Activated CD8-positive, alpha-beta memory T cell treated with anti-CD3 and anti-CD28 coated beads, Interleukin-2, amount 10 ng/mL, durations not matched to agents 7 days and 5 days (primary cell): ENCODE measurements at regions of chr1 and their contacts with region 1.

Region 1: DNA sequence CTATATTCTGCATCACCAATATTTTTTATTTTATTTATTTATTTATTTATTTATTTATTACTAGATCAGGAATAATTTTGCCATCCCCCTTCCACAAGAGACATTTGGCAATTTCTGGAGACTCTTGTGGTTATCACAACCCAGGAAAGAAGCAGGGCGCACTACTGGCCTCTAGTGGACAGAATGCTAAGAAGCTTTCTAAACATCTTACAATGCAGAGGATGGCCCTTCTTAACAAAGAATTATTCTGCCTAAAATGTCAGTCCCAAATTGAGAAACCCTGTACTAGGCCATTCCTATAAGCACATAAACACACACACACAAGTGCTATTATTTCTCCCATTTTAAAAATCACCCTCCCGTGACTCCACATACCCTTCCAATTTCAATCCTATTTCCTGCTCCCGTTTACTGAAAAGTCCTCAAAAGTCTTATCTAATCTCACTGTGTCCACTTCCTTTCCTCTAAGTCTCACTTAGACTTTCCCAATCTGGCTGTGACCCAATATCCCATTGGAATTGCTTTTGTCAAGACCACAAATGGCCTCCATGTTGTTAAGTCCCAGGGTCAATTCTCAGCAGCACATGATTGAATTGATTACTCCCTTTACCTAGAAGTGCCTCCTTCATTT is 43.7 kb upstream of the RNF11 start:
- DNase-seq: peak; percentile 65
- ATAC-seq: peak; percentile 45
- H3K4me3 Mint-ChIP-seq: no peak overlapping the region
- H3K27ac Mint-ChIP-seq: no peak overlapping the region
- H3K4me1 Mint-ChIP-seq: no peaks in the 10 kb centered on the region
- H3K27me3 Mint-ChIP-seq: peaks cover 6% of the 10 kb centered on the region

Region 2: DNA sequence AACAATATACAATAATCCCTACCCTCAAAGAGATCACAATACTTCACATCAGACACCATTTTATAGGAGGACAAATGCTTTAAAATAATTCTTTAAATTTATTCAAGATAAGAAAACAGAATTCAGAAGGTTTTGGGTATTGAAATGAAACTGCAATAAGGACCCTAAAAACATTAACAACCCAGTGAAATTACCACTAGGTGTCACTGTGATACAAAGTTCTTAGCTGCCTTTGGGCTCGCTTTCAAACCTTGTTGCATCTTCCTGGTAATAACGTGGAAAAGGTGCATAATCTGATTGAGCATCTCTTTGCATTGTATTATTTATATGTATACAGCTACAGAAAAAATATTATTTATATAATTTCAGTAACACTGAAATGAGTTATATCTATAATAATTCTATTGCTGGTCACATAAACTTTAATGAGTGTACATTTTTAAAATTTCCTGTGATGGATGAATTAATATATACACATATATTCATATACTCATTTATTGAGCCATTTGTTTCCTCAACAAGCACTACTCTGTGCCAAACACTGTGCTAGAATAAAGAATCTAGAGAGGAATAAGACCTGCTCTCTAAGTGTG is 417.5 kb before region 1 on chr1:
- CTCF ChIA-PET with region 1: interaction called, 69 read pairs
- DNase-seq: no peak
- ATAC-seq: no peak
- H3K4me3 Mint-ChIP-seq: no peak overlapping the region
- H3K27ac Mint-ChIP-seq: no peak overlapping the region
- H3K4me1 Mint-ChIP-seq: no peaks in the 10 kb centered on the region
- H3K27me3 Mint-ChIP-seq: no peaks in the 10 kb centered on the region

Region 3: GRCh38 chr1:50929376-50929958 is 262.9 kb before region 1 on chr1:
- CTCF ChIA-PET with region 1: interaction called, 16 read pairs
- DNase-seq: no peak
- ATAC-seq: no peak
- H3K4me3 Mint-ChIP-seq: no peak overlapping the region
- H3K27ac Mint-ChIP-seq: no peak overlapping the region
- H3K4me1 Mint-ChIP-seq: peaks cover 16% of the 10 kb centered on the region
- H3K27me3 Mint-ChIP-seq: no peaks in the 10 kb centered on the region

Region 4: GRCh38 chr1:50978144-50978851 is 214.0 kb before region 1 on chr1:
- CTCF ChIA-PET with region 1: no interaction called
- DNase-seq: peak; percentile 45
- ATAC-seq: peak; percentile 48
- H3K4me3 Mint-ChIP-seq: peak overlapping the region; percentile 77
- H3K27ac Mint-ChIP-seq: peak overlapping the region; percentile 48
- H3K4me1 Mint-ChIP-seq: peaks cover 22% of the 10 kb centered on the region
- H3K27me3 Mint-ChIP-seq: peaks cover 58% of the 10 kb centered on the region

Region 5: GRCh38 chr1:51203121-51203873 is 11.0 kb after region 1 on chr1:
- CTCF ChIA-PET with region 1: interaction called, 11 read pairs
- DNase-seq: no peak
- ATAC-seq: no peak
- H3K4me3 Mint-ChIP-seq: no peak overlapping the region
- H3K27ac Mint-ChIP-seq: no peak overlapping the region
- H3K4me1 Mint-ChIP-seq: no peaks in the 10 kb centered on the region
- H3K27me3 Mint-ChIP-seq: no peaks in the 10 kb centered on the region

Region 6: GRCh38 chr1:51296383-51297357 is 104.3 kb after region 1 on chr1:
- CTCF ChIA-PET with region 1: interaction called, 41 read pairs
- DNase-seq: peak; percentile 84
- ATAC-seq: peak; percentile 76
- H3K4me3 Mint-ChIP-seq: peak overlapping the region; percentile 58
- H3K27ac Mint-ChIP-seq: peak overlapping the region; percentile 71
- H3K4me1 Mint-ChIP-seq: peaks cover 37% of the 10 kb centered on the region
- H3K27me3 Mint-ChIP-seq: peaks cover 3% of the 10 kb centered on the region

Region 7: DNA sequence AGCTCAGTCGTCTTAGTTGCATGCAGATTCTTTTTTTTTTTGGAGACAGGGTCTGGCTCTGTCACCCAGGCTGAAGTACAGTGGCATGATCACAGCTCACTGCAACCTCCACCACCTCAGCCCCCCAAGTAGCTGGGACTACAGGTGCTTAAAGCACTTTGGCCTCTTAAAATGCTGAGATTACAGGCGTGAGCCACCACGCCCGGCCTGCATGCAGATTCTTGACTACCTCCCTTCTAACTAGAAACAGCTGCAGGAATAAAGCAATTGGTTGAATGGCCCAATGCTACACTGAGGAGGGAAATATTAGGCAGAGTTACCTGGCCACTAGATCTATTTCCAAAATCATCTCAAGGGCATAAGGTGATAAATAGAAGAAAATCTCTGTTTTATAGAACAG is 167.6 kb after region 1 on chr1:
- CTCF ChIA-PET with region 1: no interaction called
- DNase-seq: no peak
- ATAC-seq: no peak
- H3K4me3 Mint-ChIP-seq: no peak overlapping the region
- H3K27ac Mint-ChIP-seq: no peak overlapping the region
- H3K4me1 Mint-ChIP-seq: no peaks in the 10 kb centered on the region
- H3K27me3 Mint-ChIP-seq: no peaks in the 10 kb centered on the region

Region 8: DNA sequence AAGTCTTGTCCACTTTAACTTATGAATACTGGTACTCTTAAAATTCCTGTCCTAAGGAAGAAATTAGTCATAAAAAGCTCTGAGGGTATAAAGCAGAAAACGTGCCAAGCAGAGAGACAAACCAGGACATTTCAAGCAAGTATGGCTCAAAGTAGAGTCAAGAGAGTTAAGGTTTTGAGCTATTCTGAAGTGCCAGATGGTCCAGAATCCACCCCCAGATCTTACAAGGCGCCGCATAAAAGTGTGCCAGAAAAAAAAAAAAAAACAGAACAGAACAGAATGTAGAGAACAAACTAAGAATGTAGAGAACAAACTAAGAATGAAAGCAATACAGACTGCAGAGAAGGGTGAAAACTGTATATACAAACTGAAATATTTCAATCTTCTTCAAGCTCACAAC is 314.2 kb after region 1 on chr1:
- CTCF ChIA-PET with region 1: no interaction called
- DNase-seq: no peak
- ATAC-seq: peak; percentile 32
- H3K4me3 Mint-ChIP-seq: peak overlapping the region; percentile 3
- H3K27ac Mint-ChIP-seq: peak overlapping the region; percentile 12
- H3K4me1 Mint-ChIP-seq: peaks cover 44% of the 10 kb centered on the region
- H3K27me3 Mint-ChIP-seq: no peaks in the 10 kb centered on the region